H1 (cell line): ENCODE measurements at regions of chr1 and their contacts with region 1.

Region 1: GRCh38 chr1:200802865-200803512 is 64.3 kb downstream of the CAMSAP2 start:
- DNase-seq: peak; percentile 84 to 87
- H3K4me3 ChIP-seq: peak overlapping the region in 1 of 4 experiments; percentile 21; a peak in 1 of 8 replicates
- H3K27ac ChIP-seq: no peak overlapping the region
- H3K4me1 ChIP-seq: 0 out of 7 replicates have a peak, but pooled peaks cover 0 to 2% (median 0%) of the 10 kb centered on the region in 4 experiments
- H3K27me3 ChIP-seq: no peaks in the 10 kb centered on the region
- CTCF ChIP-seq: peak; percentile 87 to 99 (median 90)
- EP300 ChIP-seq: no peak
- POLR2A ChIP-seq: no peak
- RAD21 ChIP-seq: peak; percentile 90 to 92

Region 2: GRCh38 chr1:200738740-200739498 is 64.1 kb before region 1 on chr1 and contains the start of gene CAMSAP2:
- CTCF ChIA-PET with region 1: interaction called, 15 read pairs
- POLR2A ChIA-PET with region 1: no interaction called
- DNase-seq: peak in 1 of 2 experiments; percentile 87
- H3K4me3 ChIP-seq: peak within 1 kb of the TSS; percentile 83 to 97 (median 94)
- H3K27ac ChIP-seq: peak within 1 kb of the TSS; percentile 86
- H3K4me1 ChIP-seq: peaks cover 0 to 12% (median 7%) of the 10 kb centered on the region in 4 experiments; a peak in 4 of 7 replicates
- H3K27me3 ChIP-seq: peaks cover 0 to 3% (median 1%) of the 10 kb centered on the region in 4 experiments; a peak in 3 of 7 replicates
- CTCF ChIP-seq: no peak
- EP300 ChIP-seq: peak in 1 of 2 experiments; percentile 38; a peak in 1 of 3 replicates
- POLR2A ChIP-seq: peak; percentile 36 to 91
- RAD21 ChIP-seq: no peak
- total RNA-seq, gene CAMSAP2: 27.6 and 28.9 TPM in 2 replicates